GM23248 (cell line): ENCODE measurements at regions of chr12 and their contacts with region 1.

Region 1: DNA sequence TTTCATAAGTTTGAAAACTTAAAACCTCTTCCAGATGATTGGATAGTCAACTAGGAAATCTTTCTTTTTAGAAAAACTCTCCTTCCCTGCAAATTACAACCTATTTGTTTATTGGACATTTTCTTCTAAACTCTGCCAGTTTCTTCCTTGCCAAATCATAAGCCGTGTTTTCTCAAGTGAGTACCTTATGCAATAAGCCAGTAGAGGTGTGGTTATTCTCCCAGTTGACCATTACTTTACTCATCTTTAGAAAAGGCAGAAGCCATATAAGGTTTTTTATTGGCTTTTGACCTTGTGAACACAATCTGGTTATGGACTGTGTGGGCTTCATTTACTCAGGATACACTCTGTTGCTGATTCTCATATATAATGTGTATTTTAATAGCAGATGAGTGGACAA is 14.6 kb downstream of the ACTR6 start:
- DNase-seq: no peak
- H3K4me3 ChIP-seq: no peak overlapping the region
- H3K27ac ChIP-seq: no peak overlapping the region
- H3K4me1 ChIP-seq: no peaks in the 10 kb centered on the region
- H3K27me3 ChIP-seq: no peaks in the 10 kb centered on the region

Region 2: DNA sequence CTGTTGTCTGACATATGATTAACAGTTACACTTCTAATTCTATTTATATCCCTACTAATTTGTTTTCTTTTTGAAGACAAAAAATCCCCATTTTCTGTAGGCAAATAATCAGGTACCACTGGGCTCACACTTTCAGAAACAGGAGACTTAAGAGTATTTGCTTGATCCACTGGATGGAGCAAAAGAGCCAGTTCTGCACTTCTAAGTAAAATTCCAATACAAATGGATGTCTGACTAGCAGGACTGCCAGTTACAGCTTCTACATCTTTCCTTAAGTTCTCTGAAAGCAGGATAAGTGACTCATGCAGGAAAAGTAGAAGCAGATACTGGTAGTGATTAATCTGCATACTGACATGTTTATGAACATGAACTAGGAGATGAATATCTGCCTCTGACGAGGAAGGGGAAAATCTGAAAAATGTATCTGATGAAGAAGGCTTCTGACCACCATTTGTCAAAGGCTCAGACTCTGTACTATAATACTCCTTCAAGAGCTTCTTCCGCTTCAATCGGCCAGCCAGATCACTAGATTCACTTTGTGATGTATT is 156.7 kb before region 1 on chr12:
- in situ Hi-C with region 1: loop called (anchors 10 kb)
- DNase-seq: peak; percentile 85
- H3K4me3 ChIP-seq: no peak overlapping the region
- H3K27ac ChIP-seq: peak overlapping the region; percentile 52
- H3K4me1 ChIP-seq: peaks cover 13% of the 10 kb centered on the region
- H3K27me3 ChIP-seq: no peaks in the 10 kb centered on the region

Region 3: GRCh38 chr12:100114574-100114973 is 100.6 kb before region 1 on chr12:
- in situ Hi-C with region 1: no loop called
- DNase-seq: no peak
- H3K4me3 ChIP-seq: no peak overlapping the region
- H3K27ac ChIP-seq: no peak overlapping the region
- H3K4me1 ChIP-seq: peaks cover 8% of the 10 kb centered on the region
- H3K27me3 ChIP-seq: no peaks in the 10 kb centered on the region